Caco-2 (cell line): ENCODE measurements at regions of chr4 and their contacts with region 1.

Region 1: GRCh38 chr4:84966383-84967242 is at the start of gene WDFY3:
- DNase-seq: peak; percentile 77 to 82
- H3K4me3 ChIP-seq: peak within 1 kb of the TSS; percentile 66
- H3K4me3 Mint-ChIP-seq: peak within 1 kb of the TSS; percentile 92
- H3K27ac Mint-ChIP-seq: peak within 1 kb of the TSS; percentile 92
- H3K4me1 ChIP-seq: no peaks in the 10 kb centered on the region
- H3K4me1 Mint-ChIP-seq: peaks cover 6% of the 10 kb centered on the region
- H3K27me3 ChIP-seq: no peaks in the 10 kb centered on the region
- H3K27me3 Mint-ChIP-seq: no peaks in the 10 kb centered on the region
- CTCF ChIP-seq: no peak
- total RNA-seq, gene WDFY3: 42.7 and 55.9 TPM in 2 replicates

Region 2: DNA sequence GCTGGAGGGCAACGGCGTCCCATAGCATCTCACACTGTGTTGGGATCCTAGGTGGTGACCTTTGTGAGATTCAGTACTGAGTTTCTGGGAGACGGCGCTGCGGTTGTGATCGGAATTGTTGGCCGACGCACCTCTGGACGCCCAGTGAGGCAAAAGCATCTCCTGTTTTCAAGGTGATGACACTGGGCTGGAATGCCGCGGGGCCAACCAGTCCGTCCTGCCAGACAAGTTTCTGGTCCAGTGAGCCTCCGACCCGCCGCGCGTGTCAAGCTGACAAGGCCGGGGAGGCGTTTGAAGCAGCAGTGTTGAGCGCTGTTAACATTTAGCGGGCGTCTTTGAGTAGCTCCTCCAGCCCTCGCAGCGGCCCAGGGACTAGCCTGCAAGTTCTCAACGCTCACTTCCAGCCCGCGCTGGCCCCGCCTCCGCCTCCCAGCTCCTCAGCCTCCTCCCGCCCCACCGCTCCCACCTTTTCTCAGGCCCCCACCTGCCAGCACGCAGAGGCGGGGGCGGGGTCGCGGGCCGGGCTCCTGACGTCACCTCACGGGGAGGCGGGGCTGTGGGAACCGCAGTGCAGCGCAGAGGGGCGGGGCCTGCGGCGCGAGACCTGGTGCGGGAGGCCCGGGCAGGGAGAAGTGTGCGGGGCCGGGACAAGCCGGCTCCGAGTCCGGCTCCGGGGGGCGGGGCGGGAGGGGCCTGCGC is 384.2 kb before region 1 on chr4:
- CTCF ChIA-PET with region 1: interaction called, 8 read pairs
- POLR2A ChIA-PET with region 1: no interaction called
- intact Hi-C with region 1: loop called (anchors 1 kb)
- DNase-seq: peak; percentile 97 to 99
- H3K4me3 ChIP-seq: peak overlapping the region; percentile 80
- H3K4me3 Mint-ChIP-seq: peak overlapping the region; percentile 73
- H3K27ac Mint-ChIP-seq: peak overlapping the region; percentile 90
- H3K4me1 ChIP-seq: peaks cover 34% of the 10 kb centered on the region
- H3K4me1 Mint-ChIP-seq: peaks cover 35% of the 10 kb centered on the region
- H3K27me3 ChIP-seq: no peaks in the 10 kb centered on the region
- H3K27me3 Mint-ChIP-seq: no peaks in the 10 kb centered on the region
- CTCF ChIP-seq: no peak

Region 3: DNA sequence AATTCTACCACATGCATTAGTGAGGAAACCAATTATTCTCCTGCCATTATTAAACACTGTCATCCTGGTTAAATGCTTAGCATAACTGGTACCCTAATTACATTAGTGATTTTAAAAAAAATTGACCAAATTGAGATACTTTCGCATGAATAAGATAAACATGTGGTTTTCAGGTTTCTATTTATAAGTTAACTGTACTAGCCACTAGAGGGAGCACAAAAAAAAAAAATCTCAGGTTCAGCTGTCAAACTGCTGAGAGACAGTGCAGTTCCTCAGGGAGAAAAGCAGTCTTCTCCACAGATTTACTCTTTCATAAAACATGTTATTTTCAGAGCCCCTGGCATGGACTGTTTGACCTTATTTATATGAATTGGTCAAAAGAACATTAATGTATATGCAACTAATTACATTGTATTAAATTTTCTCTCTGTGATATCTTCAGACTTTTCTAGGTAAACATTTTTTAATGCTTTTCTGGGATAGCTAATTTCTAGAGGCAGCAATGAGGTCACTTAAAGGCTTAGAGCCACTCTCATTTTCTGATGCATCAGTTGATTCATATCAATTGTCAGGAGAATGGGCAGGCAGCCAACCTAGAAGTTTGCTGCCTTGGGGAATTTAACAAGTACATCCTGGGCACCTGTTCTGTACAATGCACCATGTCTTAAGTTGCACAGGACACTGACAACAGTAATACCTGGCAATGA is 216.2 kb before region 1 on chr4:
- CTCF ChIA-PET with region 1: interaction called, 8 read pairs
- POLR2A ChIA-PET with region 1: no interaction called
- intact Hi-C with region 1: loop called (anchors 1 kb)
- DNase-seq: peak in 1 of 2 experiments; percentile 41
- H3K4me3 ChIP-seq: no peak overlapping the region
- H3K4me3 Mint-ChIP-seq: no peak overlapping the region
- H3K27ac Mint-ChIP-seq: no peak overlapping the region
- H3K4me1 ChIP-seq: no peaks in the 10 kb centered on the region
- H3K4me1 Mint-ChIP-seq: no peaks in the 10 kb centered on the region
- H3K27me3 ChIP-seq: no peaks in the 10 kb centered on the region
- H3K27me3 Mint-ChIP-seq: no peaks in the 10 kb centered on the region
- CTCF ChIP-seq: peak; percentile 50 to 55

Region 4: DNA sequence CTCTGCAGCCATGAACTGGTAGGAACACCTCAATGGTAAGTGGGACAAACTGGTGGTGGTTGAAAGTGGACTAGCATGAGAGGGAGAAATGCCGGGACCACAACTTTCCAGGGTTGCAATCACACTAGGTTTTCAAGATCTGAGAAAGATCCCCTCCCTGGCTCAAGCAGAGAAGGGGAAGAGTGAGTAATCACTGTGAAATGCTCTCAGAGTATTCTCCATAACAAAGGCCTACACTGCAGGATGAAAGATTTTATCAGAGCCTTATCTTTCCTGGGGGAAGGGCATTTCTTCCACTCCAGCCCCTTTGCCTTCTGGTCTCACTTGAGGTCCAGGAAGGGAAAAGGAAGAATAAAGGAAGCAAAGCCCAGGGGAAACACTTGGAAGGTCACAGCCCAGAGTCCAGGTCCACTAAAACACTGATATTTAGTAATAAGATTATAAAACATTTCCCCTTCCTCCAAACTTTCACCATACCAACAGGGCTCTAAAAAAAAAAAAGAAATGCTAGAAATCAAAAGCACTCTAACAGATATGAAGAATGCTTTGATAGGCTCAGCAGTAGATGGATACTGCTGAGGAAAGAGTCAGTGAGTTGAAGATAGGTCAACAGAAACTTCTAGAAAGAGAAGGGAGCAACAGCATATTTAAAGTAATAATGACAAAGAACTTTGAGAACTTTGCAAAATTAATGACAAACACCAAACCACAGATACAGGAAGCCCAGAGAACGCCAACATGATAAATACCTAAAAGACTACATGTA is 96.0 kb before region 1 on chr4:
- CTCF ChIA-PET with region 1: no interaction called
- POLR2A ChIA-PET with region 1: no interaction called
- intact Hi-C with region 1: loop called (anchors 5 kb)
- DNase-seq: peak; percentile 44 to 50
- H3K4me3 ChIP-seq: no peak overlapping the region
- H3K4me3 Mint-ChIP-seq: peak overlapping the region; percentile 64
- H3K27ac Mint-ChIP-seq: peak overlapping the region; percentile 75
- H3K4me1 ChIP-seq: peaks cover 29% of the 10 kb centered on the region
- H3K4me1 Mint-ChIP-seq: peaks cover 22% of the 10 kb centered on the region
- H3K27me3 ChIP-seq: no peaks in the 10 kb centered on the region
- H3K27me3 Mint-ChIP-seq: no peaks in the 10 kb centered on the region
- CTCF ChIP-seq: no peak

Region 5: GRCh38 chr4:84901173-84901572 is 65.4 kb before region 1 on chr4:
- CTCF ChIA-PET with region 1: no interaction called
- POLR2A ChIA-PET with region 1: no interaction called
- intact Hi-C with region 1: loop called (anchors 5 kb)
- DNase-seq: no peak
- H3K4me3 ChIP-seq: no peak overlapping the region
- H3K4me3 Mint-ChIP-seq: no peak overlapping the region
- H3K27ac Mint-ChIP-seq: no peak overlapping the region
- H3K4me1 ChIP-seq: no peaks in the 10 kb centered on the region
- H3K4me1 Mint-ChIP-seq: no peaks in the 10 kb centered on the region
- H3K27me3 ChIP-seq: no peaks in the 10 kb centered on the region
- H3K27me3 Mint-ChIP-seq: no peaks in the 10 kb centered on the region
- CTCF ChIP-seq: no peak

Region 6: DNA sequence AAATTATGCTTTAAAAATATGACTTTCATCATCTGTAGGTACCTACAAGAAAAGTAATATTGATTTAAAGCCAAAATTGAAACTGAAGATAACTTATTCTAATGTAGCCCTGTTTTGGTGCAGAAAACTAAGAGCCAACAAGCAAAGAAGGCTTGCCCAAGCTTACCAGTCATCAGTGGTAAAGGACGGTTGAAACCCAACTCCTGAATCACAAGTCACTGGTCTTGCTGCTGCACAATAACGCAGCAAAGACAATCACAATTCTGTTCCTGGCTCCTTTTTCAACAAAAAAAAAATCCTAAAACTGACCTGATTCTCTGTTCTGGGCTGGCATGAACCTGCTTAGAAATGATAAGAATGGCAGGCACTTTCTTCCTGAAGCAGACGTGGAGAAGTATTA is 34.7 kb before region 1 on chr4:
- CTCF ChIA-PET with region 1: interaction called, 11 read pairs
- POLR2A ChIA-PET with region 1: no interaction called
- intact Hi-C with region 1: no loop called
- DNase-seq: no peak
- H3K4me3 ChIP-seq: no peak overlapping the region
- H3K4me3 Mint-ChIP-seq: no peak overlapping the region
- H3K27ac Mint-ChIP-seq: no peak overlapping the region
- H3K4me1 ChIP-seq: no peaks in the 10 kb centered on the region
- H3K4me1 Mint-ChIP-seq: no peaks in the 10 kb centered on the region
- H3K27me3 ChIP-seq: no peaks in the 10 kb centered on the region
- H3K27me3 Mint-ChIP-seq: no peaks in the 10 kb centered on the region
- CTCF ChIP-seq: no peak

Region 7: GRCh38 chr4:85260064-85260463 is 293.5 kb after region 1 on chr4:
- CTCF ChIA-PET with region 1: no interaction called
- POLR2A ChIA-PET with region 1: no interaction called
- intact Hi-C with region 1: no loop called
- DNase-seq: no peak
- H3K4me3 ChIP-seq: no peak overlapping the region
- H3K4me3 Mint-ChIP-seq: no peak overlapping the region
- H3K27ac Mint-ChIP-seq: no peak overlapping the region
- H3K4me1 ChIP-seq: no peaks in the 10 kb centered on the region
- H3K4me1 Mint-ChIP-seq: no peaks in the 10 kb centered on the region
- H3K27me3 ChIP-seq: no peaks in the 10 kb centered on the region
- H3K27me3 Mint-ChIP-seq: no peaks in the 10 kb centered on the region
- CTCF ChIP-seq: no peak